Left cardiac atrium (tissue), 4 donors: ENCODE measurements at regions of chr4 and their contacts with region 1.

Region 1: DNA sequence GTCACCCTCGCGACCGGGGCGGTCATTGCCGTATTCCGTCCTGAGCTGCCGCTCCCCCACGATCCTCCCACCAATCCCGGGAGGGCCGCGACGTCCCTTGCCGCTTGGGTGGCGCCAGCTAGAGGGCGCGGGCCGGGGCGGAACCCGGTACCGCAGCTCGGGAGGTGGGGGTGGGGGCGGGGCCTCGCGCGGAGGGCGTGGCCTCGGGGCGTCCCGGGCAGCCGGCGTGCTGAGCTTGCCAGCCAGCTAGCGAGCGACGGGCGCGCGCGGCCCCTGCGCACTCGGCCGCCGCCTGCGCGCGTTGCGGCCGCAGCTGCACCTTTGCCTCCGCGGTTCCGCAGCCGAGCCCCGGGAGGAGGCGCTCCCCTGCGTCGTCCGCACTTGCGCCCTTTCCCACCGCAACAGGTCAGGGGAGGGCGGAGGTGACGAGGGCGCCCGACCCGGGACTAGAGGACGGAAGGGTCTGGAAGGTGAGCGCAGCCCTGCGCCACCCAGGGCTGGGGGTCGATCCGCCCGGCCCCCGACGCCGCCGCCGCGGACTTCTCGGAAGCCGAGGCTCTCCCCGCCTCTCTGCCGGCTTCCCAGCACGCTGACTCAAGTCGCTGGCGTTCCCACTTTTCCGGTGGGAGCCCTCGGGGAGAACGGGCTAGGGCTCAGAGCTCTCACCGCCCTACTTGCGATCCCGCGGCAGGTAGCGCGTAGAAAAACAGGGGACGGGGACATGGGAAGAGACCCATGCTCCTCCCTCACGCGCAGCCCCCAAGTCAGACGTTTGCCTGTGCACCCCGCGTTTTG is at the start of gene AFF1:
- DNase-seq: peak; percentile 95
- ATAC-seq: peak; percentile 95 to 96
- total RNA-seq, gene AFF1: 68.1 to 78.4 TPM

Region 2: DNA sequence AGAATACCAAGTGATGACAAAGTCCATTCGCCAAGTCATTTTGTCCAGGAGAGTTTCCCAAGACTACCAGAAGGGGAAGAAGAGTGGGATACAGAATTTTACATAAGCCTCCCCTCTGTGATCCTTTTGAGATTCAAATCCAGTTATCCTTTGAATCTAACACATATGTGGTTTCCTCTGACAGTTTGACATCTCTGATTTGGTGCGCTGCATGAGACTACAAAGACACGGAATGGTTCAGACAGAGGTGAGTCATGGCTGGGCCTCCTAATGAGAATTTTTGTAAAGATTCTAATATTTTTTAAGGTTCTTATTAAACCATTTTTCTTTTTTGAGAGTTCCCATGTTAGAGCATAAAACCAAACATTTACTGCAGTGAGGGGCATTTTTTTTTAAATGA is 124.1 kb before region 1 on chr4:
- intact Hi-C with region 1: no loop called
- DNase-seq: no peak
- ATAC-seq: no peak

Region 3: GRCh38 chr4:87006676-87007527 is 71.9 kb after region 1 on chr4:
- intact Hi-C with region 1: loop called (anchors 5 kb)
- DNase-seq: peak; percentile 95
- ATAC-seq: peak; percentile 94 to 96

Region 4: GRCh38 chr4:87093443-87094123 is 158.6 kb after region 1 on chr4:
- intact Hi-C with region 1: loop called in 1 of 2 experiments (anchors 5 kb)
- DNase-seq: no peak
- ATAC-seq: peak; percentile 67 to 75